Activated CD4-positive, alpha-beta T cell treated with anti-CD3 and anti-CD28 coated beads, Interleukin-2, amount 10 ng/mL, durations not matched to agents 24 days and 14 days (primary cell): ENCODE measurements at regions of chr3 and their contacts with region 1.

Region 1: DNA sequence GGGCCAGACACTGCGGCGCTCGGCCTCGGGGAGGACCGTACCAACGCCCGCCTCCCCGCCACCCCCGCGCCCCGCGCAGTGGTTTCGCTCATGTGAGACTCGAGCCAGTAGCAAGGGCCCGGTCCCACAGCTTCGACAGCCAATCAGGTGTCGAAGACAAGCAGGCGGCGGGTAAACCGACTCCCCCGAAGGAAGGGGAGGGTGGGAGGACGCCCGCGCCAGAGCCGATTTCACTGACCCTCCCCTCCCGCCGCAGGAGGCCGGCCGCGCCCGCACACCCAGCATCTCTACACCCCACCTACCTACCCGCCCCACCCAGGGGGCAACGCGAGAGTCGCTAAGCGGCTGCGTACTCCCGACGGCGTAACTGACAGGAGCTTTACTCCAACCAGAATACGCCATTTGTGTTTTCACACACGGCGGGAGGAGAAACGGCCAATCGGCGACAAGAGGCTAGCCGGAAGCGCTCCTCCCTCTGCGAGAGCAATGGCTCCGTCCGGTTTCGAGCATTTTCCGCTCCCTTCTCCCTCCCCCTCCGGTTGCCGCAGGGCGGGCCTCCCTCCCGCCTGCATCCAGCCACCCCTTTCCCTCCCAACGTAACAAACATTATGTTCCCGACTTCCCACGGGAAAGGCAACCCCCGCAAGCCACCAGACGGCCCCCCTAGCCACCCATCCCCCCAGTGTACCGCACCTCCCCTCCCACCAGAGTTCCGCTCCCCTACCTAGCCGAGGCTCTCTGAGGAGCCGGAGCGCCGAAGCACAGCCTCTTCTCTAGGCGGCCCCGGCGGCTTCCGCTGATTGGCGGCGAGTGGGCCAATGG is 504 bp upstream of the SETD5 start:
- DNase-seq: peak; percentile 100
- H3K4me3 Mint-ChIP-seq: peak overlapping the region; percentile 90
- H3K27ac Mint-ChIP-seq: peak overlapping the region; percentile 99
- H3K4me1 Mint-ChIP-seq: peaks cover 59% of the 10 kb centered on the region
- H3K27me3 Mint-ChIP-seq: no peaks in the 10 kb centered on the region

Region 2: GRCh38 chr3:9362731-9363530 is 34.0 kb before region 1 on chr3 and contains the start of gene THUMPD3:
- intact Hi-C with region 1: loop called (anchors 1 kb)
- DNase-seq: peak; percentile 98
- H3K4me3 Mint-ChIP-seq: peak within 1 kb of the TSS; percentile 92
- H3K27ac Mint-ChIP-seq: peak within 1 kb of the TSS; percentile 99
- H3K4me1 Mint-ChIP-seq: peaks cover 19% of the 10 kb centered on the region
- H3K27me3 Mint-ChIP-seq: peaks cover 3% of the 10 kb centered on the region
- total RNA-seq, gene THUMPD3: 58.6 and 64.2 TPM in 2 replicates

Region 3: GRCh38 chr3:9430733-9431132 is 33.8 kb after region 1 on chr3:
- intact Hi-C with region 1: no loop called
- DNase-seq: no peak
- H3K4me3 Mint-ChIP-seq: no peak overlapping the region
- H3K27ac Mint-ChIP-seq: no peak overlapping the region
- H3K4me1 Mint-ChIP-seq: peaks cover 6% of the 10 kb centered on the region
- H3K27me3 Mint-ChIP-seq: no peaks in the 10 kb centered on the region

Region 4: GRCh38 chr3:9452417-9452816 is 55.5 kb after region 1 on chr3:
- intact Hi-C with region 1: loop called (anchors 1 kb)
- DNase-seq: no peak
- H3K4me3 Mint-ChIP-seq: peak overlapping the region; percentile 48
- H3K27ac Mint-ChIP-seq: peak overlapping the region; percentile 78
- H3K4me1 Mint-ChIP-seq: peaks cover 27% of the 10 kb centered on the region
- H3K27me3 Mint-ChIP-seq: no peaks in the 10 kb centered on the region

Region 5: GRCh38 chr3:9731206-9732079 is 334.5 kb after region 1 on chr3 and contains the start of gene BRPF1:
- intact Hi-C with region 1: loop called (anchors 2 kb)
- DNase-seq: peak; percentile 98
- H3K4me3 Mint-ChIP-seq: peak within 1 kb of the TSS; percentile 87
- H3K27ac Mint-ChIP-seq: peak within 1 kb of the TSS; percentile 95
- H3K4me1 Mint-ChIP-seq: peaks cover 65% of the 10 kb centered on the region
- H3K27me3 Mint-ChIP-seq: no peaks in the 10 kb centered on the region
- total RNA-seq, gene BRPF1: 41.7 and 45.3 TPM in 2 replicates

Region 6: DNA sequence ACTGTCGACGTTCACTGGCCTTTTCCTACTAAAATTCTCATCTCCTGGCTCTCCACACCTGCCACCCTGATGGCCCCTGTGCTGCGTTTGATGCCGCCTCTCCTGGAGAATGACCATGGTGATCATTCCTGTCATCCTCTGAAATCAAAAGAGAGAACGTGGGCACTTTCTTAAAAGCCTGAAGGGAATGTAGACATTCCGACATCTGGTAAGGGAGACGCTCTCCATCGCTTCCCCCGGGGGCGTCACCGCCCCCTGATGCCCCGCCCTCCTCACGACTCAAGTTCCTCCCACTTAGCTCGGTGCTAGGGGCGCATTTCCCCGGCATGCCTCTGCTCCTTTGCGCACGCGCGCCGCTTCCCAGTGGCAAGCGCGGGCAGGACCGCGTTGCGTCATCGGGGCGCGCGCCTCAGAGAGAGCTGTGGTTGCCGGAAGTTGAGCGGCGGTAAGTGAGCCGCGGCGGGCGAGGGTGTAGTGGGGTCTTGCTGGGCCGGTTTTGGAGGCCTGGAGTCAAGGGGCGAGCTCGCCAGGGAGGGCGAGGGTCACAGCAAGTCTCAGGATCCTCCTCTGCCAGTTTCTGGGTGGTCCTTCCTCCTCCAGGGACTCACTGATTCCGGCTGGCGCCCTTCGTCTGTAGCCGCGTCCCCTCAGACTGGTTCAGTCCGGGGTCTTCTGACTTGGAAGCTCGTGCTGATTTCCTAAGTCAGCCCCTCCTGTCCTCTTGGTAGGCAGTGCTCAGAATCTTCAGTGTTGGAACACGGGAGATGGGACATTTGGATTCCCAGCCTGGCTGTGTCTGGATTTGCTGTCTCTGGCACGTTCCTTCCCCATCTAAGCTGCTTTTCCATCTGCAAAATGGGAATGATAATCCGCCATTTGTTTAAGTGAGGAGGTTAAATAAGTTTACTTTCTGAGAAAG is 1875.3 kb after region 1 on chr3 and contains the start of gene ATG7:
- intact Hi-C with region 1: loop called (anchors 5 kb)
- DNase-seq: peak; percentile 99
- H3K4me3 Mint-ChIP-seq: peak within 1 kb of the TSS; percentile 96
- H3K27ac Mint-ChIP-seq: peak within 1 kb of the TSS; percentile 94
- H3K4me1 Mint-ChIP-seq: peaks cover 43% of the 10 kb centered on the region
- H3K27me3 Mint-ChIP-seq: peaks cover 4% of the 10 kb centered on the region
- total RNA-seq, gene ATG7: 37.7 and 41.4 TPM in 2 replicates